ENCODE measurements at regions of chr2 and their contacts with region 1.

Region 1: DNA sequence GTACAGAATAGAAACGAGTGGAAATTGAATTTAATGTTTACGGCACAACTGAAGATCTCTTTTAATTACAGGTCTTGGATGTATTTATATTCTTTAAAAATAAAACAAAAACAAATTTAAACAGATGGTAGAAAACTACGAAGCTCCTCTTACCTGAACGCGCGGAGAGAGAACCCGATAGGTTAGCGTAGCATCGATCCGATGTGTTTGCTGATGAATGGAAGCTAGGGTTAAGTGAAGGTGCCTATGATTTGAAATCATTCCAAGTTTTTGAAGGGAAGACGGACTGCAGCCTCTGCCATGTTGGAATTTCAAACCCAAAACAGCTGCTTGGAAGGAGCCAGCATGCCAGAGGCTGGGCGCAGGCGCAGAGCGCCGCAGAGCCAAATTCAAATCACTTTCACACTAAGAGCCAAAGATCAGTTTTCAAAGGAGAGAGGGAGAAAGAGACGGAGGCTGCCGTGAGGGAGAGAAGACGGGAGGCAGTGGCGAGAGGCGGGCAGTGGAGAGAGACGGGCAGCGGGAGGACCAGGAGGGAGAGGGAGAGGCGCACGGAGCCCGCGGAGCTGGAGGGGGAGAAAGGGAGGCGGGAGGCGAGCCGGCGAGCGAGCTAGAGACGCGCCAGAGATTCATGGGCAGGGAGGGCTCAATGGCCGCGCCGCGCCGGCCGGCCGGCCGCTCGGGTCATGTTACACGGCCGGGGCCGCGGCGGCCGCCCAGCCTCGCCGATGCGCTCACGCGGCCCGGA is at the start of gene FIGN:
- DNase-seq: peak; percentile 67 to 85 (median 84)
- ATAC-seq: peak; percentile 80 to 92 (median 85)
- H3K4me3 ChIP-seq: peak within 1 kb of the TSS; percentile 12 to 80 (median 62)
- H3K27ac ChIP-seq: peak within 1 kb of the TSS; percentile 87 to 96 (median 92)
- H3K4me1 ChIP-seq: peaks cover 0 to 7% (median 0%) of the 10 kb centered on the region in 12 donors
- H3K27me3 ChIP-seq: peaks cover 0 to 27% (median 0%) of the 10 kb centered on the region in 9 donors
- CTCF ChIP-seq: no peak
- POLR2A ChIP-seq: peak in 1 of 2 donors; percentile 55
- total RNA-seq, gene FIGN: 7.1 to 16.5 (median 12.4) TPM

Region 2: GRCh38 chr2:163465440-163465839 is 270.4 kb before region 1 on chr2:
- intact Hi-C with region 1: loop called in 6 of 10 experiments (anchors 5 to 10 kb)
- DNase-seq: no peak
- ATAC-seq: peak in 3 of 4 donors; percentile 62 to 72 (median 67)
- H3K4me3 ChIP-seq: no peak overlapping the region
- H3K27ac ChIP-seq: no peak overlapping the region
- H3K4me1 ChIP-seq: peaks cover 0 to 25% (median 2%) of the 10 kb centered on the region in 12 donors
- H3K27me3 ChIP-seq: no peaks in the 10 kb centered on the region
- CTCF ChIP-seq: no peak
- POLR2A ChIP-seq: no peak

Region 3: DNA sequence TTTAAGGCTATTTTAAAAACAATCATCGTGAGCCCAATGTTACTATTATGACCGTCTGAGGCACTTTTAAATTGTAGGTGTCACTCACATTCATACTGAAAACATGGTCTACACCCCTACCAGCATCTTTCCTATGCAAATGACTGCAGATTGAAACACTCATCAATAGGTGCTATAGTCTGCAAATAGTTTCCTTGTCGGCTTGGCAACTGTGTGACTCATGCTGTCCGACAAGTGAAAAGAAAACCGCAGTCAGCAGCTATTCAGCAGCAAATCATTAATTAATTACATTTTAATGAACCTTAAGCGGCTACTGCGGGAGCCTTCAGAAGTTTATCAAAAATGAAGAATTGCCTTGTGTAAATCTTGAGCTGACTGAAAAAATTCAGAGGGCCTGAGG is 134.5 kb before region 1 on chr2:
- intact Hi-C with region 1: loop called in 3 of 10 experiments (anchors 5 to 10 kb)
- DNase-seq: no peak
- ATAC-seq: no peak
- H3K4me3 ChIP-seq: no peak overlapping the region
- H3K27ac ChIP-seq: no peak overlapping the region
- H3K4me1 ChIP-seq: peaks cover 0 to 18% (median 4%) of the 10 kb centered on the region in 12 donors
- H3K27me3 ChIP-seq: no peaks in the 10 kb centered on the region
- CTCF ChIP-seq: no peak
- POLR2A ChIP-seq: no peak

Region 4: DNA sequence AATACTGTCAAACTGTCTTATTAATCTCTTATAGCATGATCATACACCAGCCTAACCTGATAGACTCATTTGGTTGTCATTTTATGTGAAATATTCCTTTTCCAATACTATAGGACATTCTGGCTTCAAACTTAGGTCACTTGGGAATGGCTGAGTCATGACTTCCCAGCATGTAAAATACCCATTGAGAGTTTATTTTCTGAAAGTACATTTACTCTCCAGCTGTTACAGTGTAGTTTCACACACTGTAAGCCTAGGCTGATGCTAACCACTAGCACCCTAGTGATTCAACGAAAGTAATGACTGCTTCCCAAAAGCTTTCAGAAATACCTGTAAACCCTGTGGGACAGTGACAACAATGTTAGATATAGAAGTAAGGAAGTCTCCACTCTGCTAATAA is 93.9 kb before region 1 on chr2:
- intact Hi-C with region 1: loop called in 1 of 10 experiments (anchors 10 kb)
- DNase-seq: no peak
- ATAC-seq: peak in 1 of 4 donors; percentile 38
- H3K4me3 ChIP-seq: no peak overlapping the region
- H3K27ac ChIP-seq: no peak overlapping the region
- H3K4me1 ChIP-seq: peaks cover 0 to 38% (median 6%) of the 10 kb centered on the region in 12 donors
- H3K27me3 ChIP-seq: no peaks in the 10 kb centered on the region
- CTCF ChIP-seq: no peak
- POLR2A ChIP-seq: no peak

Region 5: GRCh38 chr2:163667064-163667887 is 68.6 kb before region 1 on chr2:
- intact Hi-C with region 1: loop called in 3 of 10 experiments (anchors 5 to 10 kb)
- DNase-seq: peak in 3 of 5 donors; percentile 25 to 47 (median 42)
- ATAC-seq: peak; percentile 84 to 94 (median 92)
- H3K4me3 ChIP-seq: no peak overlapping the region
- H3K27ac ChIP-seq: peak overlapping the region in 11 of 12 donors; percentile 18 to 88 (median 69)
- H3K4me1 ChIP-seq: peaks cover 0 to 46% (median 15%) of the 10 kb centered on the region in 12 donors
- H3K27me3 ChIP-seq: no peaks in the 10 kb centered on the region
- CTCF ChIP-seq: no peak
- POLR2A ChIP-seq: no peak

Region 6: GRCh38 chr2:163771601-163772000 is 35.7 kb after region 1 on chr2:
- intact Hi-C with region 1: no loop called
- DNase-seq: no peak
- ATAC-seq: no peak
- H3K4me3 ChIP-seq: no peak overlapping the region
- H3K27ac ChIP-seq: no peak overlapping the region
- H3K4me1 ChIP-seq: no peaks in the 10 kb centered on the region
- H3K27me3 ChIP-seq: no peaks in the 10 kb centered on the region
- CTCF ChIP-seq: no peak
- POLR2A ChIP-seq: no peak

Region 7: DNA sequence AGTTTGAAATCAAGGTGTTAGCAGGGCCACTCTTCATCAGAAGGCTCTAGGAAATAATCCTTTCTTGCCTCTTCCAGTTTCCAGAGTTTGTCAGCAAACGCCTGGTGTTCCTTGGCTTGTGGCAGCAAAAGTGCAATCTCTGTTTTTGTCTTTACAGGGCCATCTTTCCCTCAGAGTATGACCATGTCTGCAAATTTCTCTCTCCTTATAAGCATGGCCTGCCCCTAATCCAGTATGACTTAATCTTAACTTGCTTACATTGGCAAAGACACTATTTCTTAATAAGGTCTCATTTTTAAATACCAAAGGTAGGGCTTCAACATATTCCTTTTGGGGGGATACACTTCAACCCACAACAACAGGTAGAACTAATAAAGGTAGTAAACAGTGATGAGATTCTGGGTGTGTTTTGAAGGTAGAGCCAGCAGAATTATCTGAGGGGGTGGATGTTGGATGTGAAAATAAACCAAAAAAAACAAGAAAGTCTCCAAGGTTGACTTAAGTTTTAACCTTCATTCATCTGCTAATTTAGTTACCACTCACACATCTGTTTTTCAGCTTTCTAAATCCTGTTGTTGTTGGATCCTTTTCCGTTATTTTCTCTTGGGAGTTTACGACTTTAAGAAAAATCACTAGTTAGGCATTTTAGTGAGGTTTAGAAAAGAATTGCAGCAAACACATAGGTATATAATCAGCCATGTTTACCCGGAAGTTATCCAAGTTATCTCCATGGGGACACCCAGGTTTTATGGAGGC is 234.4 kb after region 1 on chr2:
- intact Hi-C with region 1: loop called in 1 of 10 experiments (anchors 10 kb)
- DNase-seq: peak in 1 of 5 donors; percentile 10
- ATAC-seq: peak; percentile 49 to 90 (median 68)
- H3K4me3 ChIP-seq: no peak overlapping the region
- H3K27ac ChIP-seq: peak overlapping the region in 4 of 12 donors; percentile 29 to 52 (median 32)
- H3K4me1 ChIP-seq: peaks cover 0 to 9% (median 0%) of the 10 kb centered on the region in 12 donors
- H3K27me3 ChIP-seq: no peaks in the 10 kb centered on the region
- CTCF ChIP-seq: no peak
- POLR2A ChIP-seq: no peak

Region 8: GRCh38 chr2:164061129-164061746 is 325.4 kb after region 1 on chr2:
- intact Hi-C with region 1: loop called in 3 of 10 experiments (anchors 5 to 10 kb)
- DNase-seq: peak in 1 of 5 donors; percentile 28
- ATAC-seq: peak in 1 of 4 donors; percentile 49
- H3K4me3 ChIP-seq: no peak overlapping the region
- H3K27ac ChIP-seq: no peak overlapping the region
- H3K4me1 ChIP-seq: no peaks in the 10 kb centered on the region
- H3K27me3 ChIP-seq: no peaks in the 10 kb centered on the region
- CTCF ChIP-seq: peak; percentile 36 to 70 (median 58)
- POLR2A ChIP-seq: no peak

Measured in heart left ventricle (tissue), 16 donors.